ENCODE measurements at regions of chr12 and their contacts with region 1.

Region 1: DNA sequence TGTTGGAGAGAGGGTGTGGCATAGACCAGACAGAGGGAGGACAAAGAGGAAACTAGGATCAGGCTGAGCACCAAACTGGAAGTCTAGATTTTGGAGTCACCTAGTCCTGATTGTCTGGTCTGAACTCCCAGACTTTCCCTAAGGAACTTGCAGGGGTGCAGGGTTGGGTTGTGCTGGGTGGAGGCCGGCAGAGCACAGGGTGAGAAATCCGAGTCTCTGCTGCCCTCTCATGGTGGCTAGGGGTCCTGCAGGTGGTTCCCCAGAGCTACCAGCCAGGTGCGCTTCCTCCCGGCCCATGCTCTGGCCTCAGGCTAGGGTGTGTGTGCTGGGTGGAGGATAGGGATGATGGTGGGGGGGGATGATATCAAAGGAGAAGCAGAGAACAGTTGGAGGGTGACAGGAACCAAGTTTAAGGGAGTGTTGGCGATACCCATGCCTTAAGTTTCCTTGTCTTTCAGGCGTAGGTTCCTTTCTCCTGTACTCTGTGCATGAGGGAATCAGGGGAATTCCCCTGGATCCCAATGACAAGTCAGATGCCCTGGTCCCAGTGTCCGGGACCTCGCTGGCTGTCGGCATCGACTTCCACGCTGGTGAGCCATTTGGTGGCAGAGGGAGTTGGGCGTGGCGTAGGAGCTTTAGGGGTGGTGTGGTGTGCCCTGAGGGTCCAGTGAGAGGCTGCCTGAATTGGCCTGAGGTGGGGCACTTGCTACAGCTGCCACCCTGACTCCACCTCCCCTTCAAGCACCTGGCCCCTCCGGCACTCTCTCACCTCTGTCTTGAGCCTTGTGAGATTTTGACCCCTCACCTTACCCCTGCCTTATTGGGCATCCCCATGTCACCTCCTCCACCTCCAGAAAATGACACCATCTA is 33.4 kb upstream of the NXPH4 start:
- DNase-seq: peak; percentile 73 to 85
- ATAC-seq: peak; percentile 80 to 94 (median 92)
- H3K4me3 ChIP-seq: no peak overlapping the region
- H3K27ac ChIP-seq: no peak overlapping the region
- H3K4me1 ChIP-seq: no peaks in the 10 kb centered on the region
- H3K27me3 ChIP-seq: no peaks in the 10 kb centered on the region
- CTCF ChIP-seq: peak; percentile 83

Region 2: GRCh38 chr12:57069523-57069922 is 113.6 kb before region 1 on chr12:
- intact Hi-C with region 1: loop called (anchors 2 to 5 kb)
- DNase-seq: peak in 1 of 2 donors; percentile 36
- ATAC-seq: peak; percentile 90 to 99 (median 95)
- H3K4me3 ChIP-seq: no peak overlapping the region
- H3K27ac ChIP-seq: no peak overlapping the region
- H3K4me1 ChIP-seq: no peaks in the 10 kb centered on the region
- H3K27me3 ChIP-seq: no peaks in the 10 kb centered on the region
- CTCF ChIP-seq: peak; percentile 87

Region 3: GRCh38 chr12:57088459-57089248 is 94.5 kb before region 1 on chr12 and contains the start of gene NAB2:
- intact Hi-C with region 1: no loop called
- DNase-seq: peak; percentile 97 to 98
- ATAC-seq: peak; percentile 82 to 87 (median 84)
- H3K4me3 ChIP-seq: peak within 1 kb of the TSS; percentile 84
- H3K27ac ChIP-seq: peak within 1 kb of the TSS; percentile 92
- H3K4me1 ChIP-seq: peaks cover 22% of the 10 kb centered on the region
- H3K27me3 ChIP-seq: no peaks in the 10 kb centered on the region
- CTCF ChIP-seq: no peak
- total RNA-seq, gene NAB2: 7.1 to 28.4 (median 10.8) TPM

Region 4: GRCh38 chr12:57111031-57111734 is 72.0 kb before region 1 on chr12 and contains the start of gene STAT6:
- intact Hi-C with region 1: no loop called
- DNase-seq: peak; percentile 72 to 86
- ATAC-seq: peak; percentile 43 to 66 (median 48)
- H3K4me3 ChIP-seq: peak within 1 kb of the TSS; percentile 72
- H3K27ac ChIP-seq: peak within 1 kb of the TSS; percentile 88
- H3K4me1 ChIP-seq: peaks cover 11% of the 10 kb centered on the region
- H3K27me3 ChIP-seq: no peaks in the 10 kb centered on the region
- CTCF ChIP-seq: no peak
- total RNA-seq, gene STAT6: 14.1 to 27.7 (median 18.2) TPM

Region 5: GRCh38 chr12:57124259-57124877 is 58.8 kb before region 1 on chr12:
- intact Hi-C with region 1: loop called (anchors 1 to 2 kb)
- DNase-seq: peak in 1 of 2 donors; percentile 63
- ATAC-seq: peak; percentile 53 to 71 (median 64)
- H3K4me3 ChIP-seq: no peak overlapping the region
- H3K27ac ChIP-seq: no peak overlapping the region
- H3K4me1 ChIP-seq: peaks cover 8% of the 10 kb centered on the region
- H3K27me3 ChIP-seq: no peaks in the 10 kb centered on the region
- CTCF ChIP-seq: peak; percentile 98

Region 6: GRCh38 chr12:57299514-57300016 is 116.4 kb after region 1 on chr12:
- intact Hi-C with region 1: no loop called
- DNase-seq: no peak
- ATAC-seq: peak; percentile 64 to 90 (median 82)
- H3K4me3 ChIP-seq: no peak overlapping the region
- H3K27ac ChIP-seq: no peak overlapping the region
- H3K4me1 ChIP-seq: peaks cover 12% of the 10 kb centered on the region
- H3K27me3 ChIP-seq: no peaks in the 10 kb centered on the region
- CTCF ChIP-seq: no peak

Region 7: DNA sequence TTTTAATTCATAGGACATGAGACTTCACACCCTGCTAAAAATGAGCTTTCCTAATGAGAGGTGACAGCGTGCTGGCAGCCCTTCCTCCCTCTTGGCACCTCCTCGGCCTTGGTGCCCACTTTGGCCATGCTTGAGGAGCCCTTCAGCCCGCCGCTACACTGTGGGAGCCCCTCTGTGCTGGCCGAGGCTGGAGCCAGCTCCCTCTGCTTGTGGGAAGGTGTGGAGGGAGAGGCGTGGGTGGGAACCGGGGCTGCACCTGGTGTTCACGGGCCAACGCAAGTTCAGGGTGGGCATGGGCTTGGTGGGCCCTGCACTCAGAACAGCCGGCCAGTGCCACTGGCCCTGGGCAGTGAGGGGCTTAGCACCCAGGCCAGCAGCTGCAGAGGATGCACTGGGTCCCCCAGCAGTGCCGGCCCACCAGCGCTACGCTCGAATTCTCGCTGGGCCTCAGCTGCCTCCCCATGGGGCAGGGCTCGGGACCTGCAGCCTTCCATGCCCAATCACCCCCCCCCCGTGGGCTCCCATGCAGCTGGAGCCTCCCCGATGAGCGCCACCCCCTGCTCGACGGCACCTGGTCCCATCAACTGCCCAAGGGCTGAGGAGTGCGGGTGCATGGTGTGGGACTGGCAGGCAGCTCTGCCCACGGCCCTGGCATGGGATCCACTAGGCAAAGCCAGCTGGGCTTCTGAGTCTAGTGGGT is 472.5 kb after region 1 on chr12:
- intact Hi-C with region 1: no loop called
- DNase-seq: no peak
- ATAC-seq: no peak
- H3K4me3 ChIP-seq: no peak overlapping the region
- H3K27ac ChIP-seq: no peak overlapping the region
- H3K4me1 ChIP-seq: no peaks in the 10 kb centered on the region
- H3K27me3 ChIP-seq: peaks cover 0 to 3% (median 0%) of the 10 kb centered on the region in 3 donors
- CTCF ChIP-seq: no peak